BJ (cell line): ENCODE measurements at regions of chr14 and their contacts with region 1.

Region 1: GRCh38 chr14:100203949-100204834 is 34.8 kb upstream of the YY1 start:
- DNase-seq: no peak
- H3K4me3 ChIP-seq: no peak overlapping the region
- H3K27me3 ChIP-seq: no peaks in the 10 kb centered on the region; the same call in 1 of the 2 replicates
- CTCF ChIP-seq: no peak

Region 2: DNA sequence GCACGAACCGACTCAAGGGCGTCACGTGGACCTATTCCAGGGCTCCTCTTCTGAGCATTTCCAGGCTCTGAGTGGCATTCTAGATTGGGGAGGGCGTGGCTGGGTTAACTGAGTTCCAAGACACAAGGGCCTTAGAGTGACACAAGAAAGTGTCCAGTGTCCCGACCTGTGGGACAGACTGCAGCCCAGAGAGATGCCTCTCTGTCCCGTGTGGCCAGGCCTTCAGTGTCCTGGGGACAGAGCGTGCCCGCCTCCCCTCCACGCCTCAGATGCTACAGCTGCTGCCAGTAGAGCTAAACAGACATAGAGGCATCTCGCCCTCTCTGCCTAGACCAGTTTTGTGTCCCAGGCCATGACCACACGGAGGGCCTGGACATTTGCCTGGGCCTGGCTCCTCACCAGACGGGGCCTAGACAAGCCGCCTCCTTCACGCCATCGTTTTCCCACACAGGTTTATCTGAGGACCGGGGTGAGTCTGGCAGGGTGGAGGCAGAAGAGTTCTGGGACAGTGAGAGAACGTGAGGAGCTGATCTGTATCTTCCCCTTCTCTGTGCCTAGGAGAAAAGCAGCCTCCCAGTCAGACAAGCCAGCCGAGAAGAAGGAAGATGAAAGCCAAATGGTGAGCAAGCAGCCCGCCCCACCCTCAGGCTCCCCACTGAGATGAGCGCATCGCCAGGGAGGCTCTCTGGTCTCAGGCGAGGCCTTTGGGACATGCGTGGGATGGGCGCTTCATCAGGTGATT is 71.9 kb before region 1 on chr14:
- CTCF ChIA-PET with region 1: no interaction called
- POLR2A ChIA-PET with region 1: no interaction called
- DNase-seq: peak; percentile 36
- H3K4me3 ChIP-seq: no peak overlapping the region
- H3K27me3 ChIP-seq: no peaks in the 10 kb centered on the region
- CTCF ChIP-seq: no peak

Region 3: GRCh38 chr14:100192672-100193416 is 11.3 kb before region 1 on chr14:
- CTCF ChIA-PET with region 1: interaction called, 11 read pairs
- POLR2A ChIA-PET with region 1: no interaction called
- DNase-seq: peak; percentile 66
- H3K4me3 ChIP-seq: peak overlapping the region; percentile 42
- H3K27me3 ChIP-seq: no peaks in the 10 kb centered on the region
- CTCF ChIP-seq: peak; percentile 94